ENCODE measurements at regions of chr21 and their contacts with region 1.

Region 1: GRCh38 chr21:28745131-28746016 is 247.3 kb downstream of the LTN1 start:
- DNase-seq: peak; percentile 85
- H3K4me3 ChIP-seq: peak overlapping the region; percentile 38 to 75 (median 51)
- H3K27ac ChIP-seq: peak overlapping the region; percentile 68
- H3K4me1 ChIP-seq: peaks cover 7% of the 10 kb centered on the region
- H3K27me3 ChIP-seq: no peaks in the 10 kb centered on the region
- CTCF ChIP-seq: peak; percentile 77 to 78
- POLR2A ChIP-seq: no peak

Region 2: GRCh38 chr21:26769613-26770188 is 1975.7 kb before region 1 on chr21:
- CTCF ChIA-PET with region 1: interaction called, 20 read pairs
- POLR2A ChIA-PET with region 1: no interaction called
- dilution Hi-C with region 1: no loop called
- intact Hi-C with region 1: loop called (anchors 1 kb)
- DNase-seq: peak; percentile 43
- H3K4me3 ChIP-seq: no peak overlapping the region
- H3K27ac ChIP-seq: no peak overlapping the region
- H3K4me1 ChIP-seq: no peaks in the 10 kb centered on the region
- H3K27me3 ChIP-seq: peaks cover 0 to 2% of the 10 kb centered on the region in 2 experiments
- CTCF ChIP-seq: peak; percentile 24 to 42
- POLR2A ChIP-seq: no peak

Region 3: GRCh38 chr21:26850108-26850643 is 1895.2 kb before region 1 on chr21:
- CTCF ChIA-PET with region 1: interaction called, 67 read pairs
- POLR2A ChIA-PET with region 1: no interaction called
- dilution Hi-C with region 1: no loop called
- intact Hi-C with region 1: loop called (anchors 1 kb)
- DNase-seq: peak; percentile 75
- H3K4me3 ChIP-seq: no peak overlapping the region
- H3K27ac ChIP-seq: no peak overlapping the region
- H3K4me1 ChIP-seq: peaks cover 11% of the 10 kb centered on the region
- H3K27me3 ChIP-seq: peaks cover 5 to 16% of the 10 kb centered on the region in 2 experiments
- CTCF ChIP-seq: no peak
- POLR2A ChIP-seq: no peak

Region 4: GRCh38 chr21:27759091-27759659 is 986.2 kb before region 1 on chr21:
- CTCF ChIA-PET with region 1: interaction called, 25 read pairs
- POLR2A ChIA-PET with region 1: no interaction called
- dilution Hi-C with region 1: no loop called
- intact Hi-C with region 1: loop called (anchors 1 kb)
- DNase-seq: no peak
- H3K4me3 ChIP-seq: no peak overlapping the region
- H3K27ac ChIP-seq: no peak overlapping the region
- H3K4me1 ChIP-seq: no peaks in the 10 kb centered on the region
- H3K27me3 ChIP-seq: no peaks in the 10 kb centered on the region
- CTCF ChIP-seq: peak in 1 of 2 donors; percentile 46
- POLR2A ChIP-seq: no peak

Region 5: DNA sequence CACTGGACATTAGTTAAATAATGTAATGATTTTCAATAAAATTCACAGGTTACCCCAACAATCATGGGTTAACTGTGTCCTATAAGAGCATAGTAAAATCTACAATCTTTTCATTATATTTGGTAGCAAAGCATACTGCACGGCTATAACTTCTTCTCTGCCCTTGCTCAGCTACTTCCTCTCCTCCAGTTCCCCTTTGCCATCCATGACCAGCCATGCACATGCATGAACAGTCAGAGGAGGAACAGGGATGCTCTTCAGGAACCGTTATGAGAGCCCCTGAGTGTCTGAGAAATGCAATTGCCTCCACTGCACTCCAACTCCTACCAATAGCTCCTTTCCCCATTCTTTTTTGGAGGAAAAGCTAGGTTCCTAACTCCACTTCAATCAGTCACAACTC is 399.4 kb before region 1 on chr21:
- CTCF ChIA-PET with region 1: interaction called, 10 read pairs
- POLR2A ChIA-PET with region 1: no interaction called
- dilution Hi-C with region 1: no loop called
- intact Hi-C with region 1: no loop called
- DNase-seq: no peak
- H3K4me3 ChIP-seq: no peak overlapping the region
- H3K27ac ChIP-seq: no peak overlapping the region
- H3K4me1 ChIP-seq: no peaks in the 10 kb centered on the region
- H3K27me3 ChIP-seq: no peaks in the 10 kb centered on the region
- CTCF ChIP-seq: no peak
- POLR2A ChIP-seq: no peak

Region 6: GRCh38 chr21:28537371-28538079 is 207.8 kb before region 1 on chr21:
- CTCF ChIA-PET with region 1: interaction called, 11 read pairs
- POLR2A ChIA-PET with region 1: no interaction called
- dilution Hi-C with region 1: no loop called
- intact Hi-C with region 1: no loop called
- DNase-seq: peak; percentile 82
- H3K4me3 ChIP-seq: no peak overlapping the region
- H3K27ac ChIP-seq: no peak overlapping the region
- H3K4me1 ChIP-seq: peaks cover 37% of the 10 kb centered on the region
- H3K27me3 ChIP-seq: no peaks in the 10 kb centered on the region
- CTCF ChIP-seq: no peak
- POLR2A ChIP-seq: no peak

Region 7: DNA sequence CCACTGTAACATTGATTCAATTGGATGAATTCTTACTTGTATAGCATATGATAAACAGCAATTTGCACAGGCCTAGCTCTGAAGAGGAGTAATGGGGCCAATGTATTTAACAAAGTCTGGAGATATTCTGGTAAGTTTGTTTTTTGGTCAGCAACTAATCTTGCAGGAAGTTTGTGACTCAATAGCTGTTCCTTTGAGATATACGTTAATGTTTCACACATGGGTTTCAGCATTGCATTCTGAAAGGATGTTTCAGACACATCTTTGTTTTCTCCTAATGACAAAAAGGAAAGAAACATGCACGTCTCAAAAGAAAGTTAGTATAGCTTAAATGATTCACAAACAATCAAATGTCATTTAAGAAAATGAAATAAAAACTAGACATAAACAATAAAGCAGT is 198.3 kb after region 1 on chr21:
- CTCF ChIA-PET with region 1: interaction called, 47 read pairs
- POLR2A ChIA-PET with region 1: no interaction called
- dilution Hi-C with region 1: no loop called
- intact Hi-C with region 1: loop called (anchors 1 kb)
- DNase-seq: peak; percentile 63
- H3K4me3 ChIP-seq: no peak overlapping the region
- H3K27ac ChIP-seq: peak overlapping the region; percentile 59
- H3K4me1 ChIP-seq: peaks cover 37% of the 10 kb centered on the region
- H3K27me3 ChIP-seq: no peaks in the 10 kb centered on the region
- CTCF ChIP-seq: no peak
- POLR2A ChIP-seq: no peak

Measured in endothelial cell of umbilical vein (primary cell).